Left lung (tissue), 14 donors: ENCODE measurements at regions of chr1 and their contacts with region 1.

Region 1: DNA sequence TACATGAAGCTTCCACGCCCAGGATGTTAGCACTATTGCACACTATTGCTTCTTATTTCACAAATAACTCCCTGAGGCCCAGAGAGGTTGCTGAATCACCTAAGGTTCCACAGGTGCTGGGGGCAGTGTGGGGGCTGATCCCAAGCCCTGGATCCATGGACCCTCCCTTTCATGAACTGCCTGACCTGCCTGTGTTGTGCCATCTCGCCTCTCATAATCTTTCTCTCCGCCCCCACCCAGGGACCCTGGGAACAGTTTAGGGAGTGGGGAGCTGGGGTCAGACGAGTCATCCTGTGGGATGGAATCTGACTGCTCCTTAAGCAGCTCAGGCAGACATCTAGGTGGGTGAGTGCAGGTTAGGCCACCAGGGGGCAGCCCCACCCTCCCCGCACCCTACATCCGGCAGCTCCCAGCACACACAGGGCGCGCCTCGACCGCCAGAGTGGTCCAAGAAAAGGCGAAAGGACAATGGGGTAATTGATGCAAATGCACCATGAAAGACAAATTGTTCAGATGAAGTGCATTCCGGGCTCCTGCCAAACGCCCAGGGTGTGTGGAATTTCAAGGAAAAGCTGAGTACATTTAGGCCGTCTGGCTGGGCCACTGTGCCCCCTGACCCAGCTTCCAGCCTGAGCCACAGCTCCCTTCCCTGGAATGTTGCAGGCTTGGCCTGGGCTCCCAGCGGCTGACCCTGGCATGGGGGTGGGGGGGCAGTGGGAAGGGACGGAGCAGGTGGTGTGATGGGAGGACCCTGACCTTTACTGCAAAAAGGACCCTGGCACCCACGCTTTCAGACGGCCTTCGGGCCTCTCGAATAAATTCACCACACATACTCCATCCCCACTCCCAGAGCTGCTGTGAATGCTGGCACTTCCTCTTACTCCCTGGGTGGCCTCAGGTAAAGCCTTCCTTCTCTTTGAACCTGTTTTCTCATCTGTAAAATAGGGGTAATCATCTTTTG is 20.8 kb downstream of the PHLDA3 start:
- DNase-seq: peak in 3 of 4 donors; percentile 70 to 92 (median 71)
- ATAC-seq: peak; percentile 94
- H3K4me3 ChIP-seq: no peak overlapping the region
- H3K27ac ChIP-seq: peak overlapping the region; percentile 33 to 59
- H3K4me1 ChIP-seq: peaks cover 20 to 35% of the 10 kb centered on the region in 2 donors
- H3K27me3 ChIP-seq: no peaks in the 10 kb centered on the region
- CTCF ChIP-seq: peak; percentile 72 to 79

Region 2: GRCh38 chr1:201481761-201482493 is 33.7 kb after region 1 on chr1:
- intact Hi-C with region 1: loop called in 1 of 2 experiments (anchors 5 kb)
- DNase-seq: peak; percentile 79 to 96 (median 88)
- ATAC-seq: peak; percentile 85
- H3K4me3 ChIP-seq: peak overlapping the region; percentile 9 to 43
- H3K27ac ChIP-seq: no peak overlapping the region
- H3K4me1 ChIP-seq: peaks cover 17 to 40% of the 10 kb centered on the region in 2 donors
- H3K27me3 ChIP-seq: peaks cover 0 to 12% of the 10 kb centered on the region in 2 donors
- CTCF ChIP-seq: peak; percentile 90 to 93

Region 3: DNA sequence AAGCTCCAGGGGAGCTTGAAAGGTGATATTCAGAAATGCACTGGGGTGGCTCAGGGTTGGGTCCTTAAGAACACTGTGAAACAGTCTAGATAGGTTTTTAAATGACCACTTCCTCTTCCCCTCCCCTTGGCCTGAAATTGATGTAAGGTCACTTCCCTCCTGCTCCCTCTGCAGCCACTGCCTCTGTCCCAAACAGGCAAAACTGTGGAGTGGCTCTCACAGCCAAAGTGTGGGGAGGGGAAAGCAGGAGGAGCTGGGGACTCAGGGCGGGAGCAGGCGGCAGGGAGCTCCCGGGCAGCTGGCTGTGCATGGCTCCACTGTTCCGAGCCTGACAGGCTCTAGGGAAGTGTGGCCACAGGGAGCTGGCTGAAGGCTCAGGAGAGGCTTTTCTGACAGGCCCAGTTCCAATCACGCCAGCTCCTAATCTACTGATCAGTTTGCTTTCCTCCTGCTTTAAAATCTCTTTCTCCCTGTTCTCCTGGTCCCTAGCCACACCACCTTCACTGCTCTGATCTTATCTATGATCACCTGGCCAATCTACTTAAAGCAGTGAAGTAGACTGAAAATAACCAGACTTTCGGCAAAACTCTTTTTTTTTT is 63.8 kb after region 1 on chr1:
- intact Hi-C with region 1: loop called in 1 of 2 experiments (anchors 10 kb)
- DNase-seq: peak in 3 of 4 donors; percentile 83 to 86 (median 86)
- ATAC-seq: peak; percentile 86
- H3K4me3 ChIP-seq: no peak overlapping the region
- H3K27ac ChIP-seq: peak overlapping the region; percentile 77 to 83
- H3K4me1 ChIP-seq: peaks cover 12 to 36% of the 10 kb centered on the region in 2 donors
- H3K27me3 ChIP-seq: no peaks in the 10 kb centered on the region
- CTCF ChIP-seq: no peak